CD8-positive, alpha-beta T cell (primary cell): ENCODE measurements at regions of chr12 and their contacts with region 1.

Region 1: DNA sequence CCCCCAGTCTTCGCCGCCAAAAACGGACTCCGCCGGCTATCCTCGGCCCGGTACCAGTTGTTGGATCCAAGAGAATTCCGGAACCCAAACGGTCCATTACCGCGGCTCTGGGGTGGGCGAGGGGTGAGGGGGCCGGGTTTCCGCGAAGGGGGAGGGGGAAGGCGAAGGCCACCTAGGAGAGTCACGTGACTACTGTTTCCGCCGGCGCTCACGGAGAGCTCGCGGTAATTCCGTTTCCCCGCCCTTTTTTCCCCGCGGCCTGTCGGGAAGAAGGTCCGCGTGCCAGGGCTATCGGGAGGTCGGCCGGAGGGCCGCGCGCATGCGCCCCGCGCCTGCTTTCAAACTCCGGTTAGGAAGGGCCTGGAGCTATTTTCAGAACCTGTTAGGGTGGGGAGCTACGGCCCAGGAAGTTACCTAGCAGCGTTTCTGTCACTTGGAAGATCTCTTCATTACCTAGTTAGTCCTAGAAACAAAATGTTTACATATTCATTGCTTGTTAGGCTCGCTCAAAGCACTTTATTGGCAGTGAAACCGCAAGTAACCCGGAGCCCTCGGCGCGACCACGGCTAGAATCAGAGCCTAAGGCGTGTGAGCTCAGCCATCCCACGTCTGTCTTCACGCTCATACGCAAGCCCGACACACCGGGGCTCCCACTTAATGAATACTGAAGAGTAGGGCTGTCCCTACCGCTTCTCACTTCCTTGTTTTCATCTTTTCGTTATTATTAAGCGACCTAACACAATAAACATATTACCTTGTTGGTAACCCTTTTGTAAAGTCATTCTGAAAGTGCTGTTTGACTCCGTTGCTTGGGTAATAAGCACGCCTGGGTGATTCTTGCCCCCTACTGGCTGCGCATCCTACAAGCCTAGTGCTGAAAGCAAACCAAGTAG is 624 bp upstream of the SBNO1 start:
- DNase-seq: peak; percentile 95 to 100 (median 97)
- ATAC-seq: peak; percentile 74
- H3K4me3 ChIP-seq: peak overlapping the region; percentile 69 to 79
- H3K4me3 Mint-ChIP-seq: peak overlapping the region; percentile 90
- H3K27ac ChIP-seq: peak overlapping the region; percentile 87 to 93
- H3K27ac Mint-ChIP-seq: peak overlapping the region; percentile 92
- H3K4me1 ChIP-seq: peaks cover 18% of the 10 kb centered on the region
- H3K4me1 Mint-ChIP-seq: peaks cover 24% of the 10 kb centered on the region
- H3K27me3 ChIP-seq: no peaks in the 10 kb centered on the region
- H3K27me3 Mint-ChIP-seq: no peaks in the 10 kb centered on the region
- CTCF ChIP-seq: peak; percentile 93

Region 2: GRCh38 chr12:122767691-122768090 is 597.6 kb before region 1 on chr12:
- CTCF ChIA-PET with region 1: no interaction called
- POLR2A ChIA-PET with region 1: no interaction called
- intact Hi-C with region 1: loop called in 1 of 2 experiments (anchors 10 kb)
- DNase-seq: no peak
- ATAC-seq: no peak
- H3K4me3 ChIP-seq: no peak overlapping the region
- H3K4me3 Mint-ChIP-seq: no peak overlapping the region
- H3K27ac ChIP-seq: no peak overlapping the region
- H3K27ac Mint-ChIP-seq: peak overlapping the region; percentile 37
- H3K4me1 ChIP-seq: no peaks in the 10 kb centered on the region
- H3K4me1 Mint-ChIP-seq: no peaks in the 10 kb centered on the region
- H3K27me3 ChIP-seq: no peaks in the 10 kb centered on the region
- H3K27me3 Mint-ChIP-seq: no peaks in the 10 kb centered on the region
- CTCF ChIP-seq: no peak

Region 3: GRCh38 chr12:123271001-123271729 is 94.1 kb before region 1 on chr12:
- CTCF ChIA-PET with region 1: interaction called, 7 read pairs
- POLR2A ChIA-PET with region 1: interaction called, 3 read pairs
- intact Hi-C with region 1: loop called (anchors 1 kb)
- DNase-seq: peak; percentile 48 to 83 (median 74)
- ATAC-seq: peak; percentile 86
- H3K4me3 ChIP-seq: peak overlapping the region in 1 of 2 experiments; percentile 49
- H3K4me3 Mint-ChIP-seq: no peak overlapping the region
- H3K27ac ChIP-seq: no peak overlapping the region
- H3K27ac Mint-ChIP-seq: no peak overlapping the region
- H3K4me1 ChIP-seq: peaks cover 26% of the 10 kb centered on the region
- H3K4me1 Mint-ChIP-seq: peaks cover 32% of the 10 kb centered on the region
- H3K27me3 ChIP-seq: no peaks in the 10 kb centered on the region
- H3K27me3 Mint-ChIP-seq: no peaks in the 10 kb centered on the region
- CTCF ChIP-seq: no peak

Region 4: DNA sequence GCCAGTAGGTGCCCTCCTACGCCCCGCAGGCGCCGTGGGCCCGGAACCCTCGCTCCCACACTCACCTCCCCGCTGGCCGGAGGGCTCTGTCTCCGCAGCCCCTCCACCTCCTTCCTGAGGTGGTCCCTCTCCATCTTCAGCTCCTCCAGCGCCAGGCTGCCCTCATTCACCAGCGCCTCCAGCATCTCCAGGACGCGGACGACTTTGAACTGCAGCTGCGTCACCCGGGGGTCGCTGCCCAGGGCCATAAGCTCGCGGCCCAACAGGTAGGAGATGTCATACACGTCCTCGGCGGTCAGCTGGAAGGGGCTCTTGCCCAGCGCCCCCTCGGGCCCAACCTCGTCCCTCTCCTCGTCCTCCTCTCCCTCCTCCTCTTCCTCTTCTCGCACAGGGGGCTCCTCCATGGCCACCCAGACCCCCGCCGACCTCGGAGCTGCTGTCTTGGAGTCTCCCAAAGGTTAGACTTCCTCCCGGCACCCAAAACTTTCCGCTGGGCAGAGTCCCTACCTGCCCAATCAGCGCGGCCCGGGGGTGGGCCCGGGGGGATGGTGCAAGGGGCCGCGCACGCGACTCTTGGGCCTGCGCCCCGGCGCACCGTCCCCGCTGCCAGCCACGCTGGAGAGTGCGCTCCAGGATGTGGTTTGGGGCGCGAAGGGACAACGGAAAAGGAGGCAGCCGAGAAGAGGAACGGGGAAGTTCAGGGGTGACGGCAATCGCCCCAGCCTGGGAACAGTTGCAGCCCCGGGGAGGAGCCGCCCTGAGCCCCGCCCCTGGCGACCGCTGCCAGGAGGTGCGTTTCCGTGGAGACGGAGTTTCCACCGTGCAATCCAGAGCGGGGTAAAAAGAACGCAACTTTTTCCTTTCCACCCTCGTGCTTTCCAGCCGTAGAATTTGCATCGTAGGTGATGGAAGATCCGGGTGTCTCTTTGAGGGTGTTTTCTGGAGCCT is 71.0 kb after region 1 on chr12 and contains the start of gene RILPL2:
- CTCF ChIA-PET with region 1: no interaction called
- POLR2A ChIA-PET with region 1: interaction called, 3 read pairs
- intact Hi-C with region 1: loop called in 1 of 2 experiments (anchors 2 kb)
- DNase-seq: peak; percentile 77 to 95 (median 90)
- ATAC-seq: peak; percentile 89
- H3K4me3 ChIP-seq: peak within 1 kb of the TSS; percentile 84 to 97
- H3K4me3 Mint-ChIP-seq: peak within 1 kb of the TSS; percentile 93
- H3K27ac ChIP-seq: peak within 1 kb of the TSS; percentile 60 to 93
- H3K27ac Mint-ChIP-seq: peak within 1 kb of the TSS; percentile 90
- H3K4me1 ChIP-seq: peaks cover 35% of the 10 kb centered on the region
- H3K4me1 Mint-ChIP-seq: peaks cover 38% of the 10 kb centered on the region
- H3K27me3 ChIP-seq: no peaks in the 10 kb centered on the region
- H3K27me3 Mint-ChIP-seq: no peaks in the 10 kb centered on the region
- CTCF ChIP-seq: no peak
- total RNA-seq, gene RILPL2: 3.4 to 3.6 TPM

Region 5: GRCh38 chr12:123580772-123581171 is 215.5 kb after region 1 on chr12:
- CTCF ChIA-PET with region 1: interaction called, 6 read pairs
- POLR2A ChIA-PET with region 1: interaction called, 3 read pairs
- intact Hi-C with region 1: loop called (anchors 1 kb)
- DNase-seq: no peak
- ATAC-seq: no peak
- H3K4me3 ChIP-seq: no peak overlapping the region
- H3K4me3 Mint-ChIP-seq: no peak overlapping the region
- H3K27ac ChIP-seq: no peak overlapping the region
- H3K27ac Mint-ChIP-seq: no peak overlapping the region
- H3K4me1 ChIP-seq: peaks cover 22% of the 10 kb centered on the region
- H3K4me1 Mint-ChIP-seq: peaks cover 28% of the 10 kb centered on the region
- H3K27me3 ChIP-seq: no peaks in the 10 kb centered on the region
- H3K27me3 Mint-ChIP-seq: no peaks in the 10 kb centered on the region
- CTCF ChIP-seq: no peak

Region 6: GRCh38 chr12:123713398-123713797 is 348.1 kb after region 1 on chr12:
- CTCF ChIA-PET with region 1: no interaction called
- POLR2A ChIA-PET with region 1: interaction called, 5 read pairs
- intact Hi-C with region 1: loop called in 1 of 2 experiments (anchors 10 kb)
- DNase-seq: peak in 1 of 9 experiments; percentile 21
- ATAC-seq: no peak
- H3K4me3 ChIP-seq: peak overlapping the region; percentile 69 to 98
- H3K4me3 Mint-ChIP-seq: peak overlapping the region; percentile 84
- H3K27ac ChIP-seq: no peak overlapping the region
- H3K27ac Mint-ChIP-seq: peak overlapping the region; percentile 86
- H3K4me1 ChIP-seq: peaks cover 22% of the 10 kb centered on the region
- H3K4me1 Mint-ChIP-seq: peaks cover 45% of the 10 kb centered on the region
- H3K27me3 ChIP-seq: no peaks in the 10 kb centered on the region
- H3K27me3 Mint-ChIP-seq: no peaks in the 10 kb centered on the region
- CTCF ChIP-seq: no peak